Activated CD8-positive, alpha-beta T cell treated with anti-CD3 and anti-CD28 coated beads for 36 hours (primary cell): ENCODE measurements at regions of chr2 and their contacts with region 1.

Region 1: GRCh38 chr2:28392297-28393113 is at the start of gene FOSL2:
- DNase-seq: peak; percentile 94
- ATAC-seq: peak; percentile 74
- H3K4me3 Mint-ChIP-seq: peak within 1 kb of the TSS; percentile 89
- H3K27ac Mint-ChIP-seq: peak within 1 kb of the TSS; percentile 96
- H3K4me1 Mint-ChIP-seq: peaks cover 30% of the 10 kb centered on the region
- H3K27me3 Mint-ChIP-seq: no peaks in the 10 kb centered on the region
- CTCF ChIP-seq: no peak
- total RNA-seq, gene FOSL2: 114 to 119 TPM

Region 2: GRCh38 chr2:27715318-27716210 is 676.9 kb before region 1 on chr2:
- CTCF ChIA-PET with region 1: no interaction called
- POLR2A ChIA-PET with region 1: no interaction called
- intact Hi-C with region 1: loop called (anchors 10 kb)
- DNase-seq: peak; percentile 70
- ATAC-seq: peak; percentile 43
- H3K4me3 Mint-ChIP-seq: peak overlapping the region; percentile 29
- H3K27ac Mint-ChIP-seq: no peak overlapping the region
- H3K4me1 Mint-ChIP-seq: peaks cover 46% of the 10 kb centered on the region
- H3K27me3 Mint-ChIP-seq: peaks cover 15% of the 10 kb centered on the region
- CTCF ChIP-seq: no peak

Region 3: DNA sequence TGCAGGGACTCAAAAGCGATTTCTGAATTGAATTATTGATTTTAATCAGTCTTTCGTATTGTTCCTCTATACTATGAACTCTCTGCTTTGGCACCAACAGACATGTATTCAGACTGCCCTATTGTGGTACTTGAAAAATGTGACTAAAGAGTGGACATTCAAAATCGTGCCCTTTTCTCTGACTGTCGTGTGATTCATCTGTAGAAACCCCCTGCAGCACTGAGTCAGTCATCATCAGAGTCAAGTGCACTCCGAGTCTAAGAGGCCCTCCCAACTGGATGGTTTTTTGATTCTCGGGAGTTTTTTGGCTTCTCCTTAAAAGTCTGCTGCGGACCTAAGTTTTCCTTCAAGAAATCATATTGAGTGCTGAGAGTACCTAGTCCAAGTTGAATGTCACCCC is 96.3 kb before region 1 on chr2:
- CTCF ChIA-PET with region 1: no interaction called
- POLR2A ChIA-PET with region 1: no interaction called
- intact Hi-C with region 1: no loop called
- DNase-seq: no peak
- ATAC-seq: peak; percentile 43
- H3K4me3 Mint-ChIP-seq: no peak overlapping the region
- H3K27ac Mint-ChIP-seq: no peak overlapping the region
- H3K4me1 Mint-ChIP-seq: peaks cover 19% of the 10 kb centered on the region
- H3K27me3 Mint-ChIP-seq: no peaks in the 10 kb centered on the region
- CTCF ChIP-seq: no peak

Region 4: DNA sequence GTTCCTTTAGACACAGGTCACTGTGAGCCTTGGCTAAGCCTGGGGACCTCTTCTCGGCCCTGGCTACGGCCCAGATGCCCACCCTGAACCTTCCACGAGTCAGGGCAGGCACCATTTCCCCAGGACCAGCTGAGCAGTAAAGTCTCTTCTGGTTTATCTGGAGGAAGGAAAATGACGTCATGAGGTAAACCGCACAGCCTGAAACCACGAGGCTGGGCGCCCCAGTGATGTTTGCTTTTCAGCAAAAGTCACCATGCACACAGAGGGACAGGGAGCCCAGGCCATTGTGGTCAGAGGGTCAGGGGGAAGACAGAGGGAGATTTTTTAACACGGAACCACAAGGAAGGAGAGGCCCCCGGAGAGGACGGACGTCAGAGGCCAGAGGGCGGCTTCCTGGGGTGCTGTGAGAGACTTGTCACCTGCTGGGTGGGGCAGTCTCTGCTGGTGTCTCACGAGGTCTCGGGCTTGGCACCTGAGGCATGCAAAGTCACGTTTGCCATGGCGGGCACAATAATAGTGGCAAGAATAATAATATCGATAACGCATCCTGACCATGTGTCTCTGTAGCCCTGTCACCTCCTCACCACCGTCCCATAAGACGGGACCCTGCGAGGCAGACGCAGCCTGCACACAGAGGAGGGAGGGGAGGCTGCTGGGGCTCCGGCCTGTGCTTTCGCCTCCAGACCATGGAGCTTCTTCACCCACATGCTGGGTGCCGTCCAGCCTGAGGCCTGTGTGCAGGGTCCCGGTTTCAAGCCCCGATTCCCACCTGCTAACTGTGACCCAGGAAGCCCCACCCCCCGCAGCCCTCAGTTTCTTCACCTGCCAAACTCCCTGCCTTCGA is 33.1 kb before region 1 on chr2:
- CTCF ChIA-PET with region 1: interaction called, 5 read pairs
- POLR2A ChIA-PET with region 1: interaction called, 11 read pairs
- intact Hi-C with region 1: no loop called
- DNase-seq: peak; percentile 93
- ATAC-seq: peak; percentile 79
- H3K4me3 Mint-ChIP-seq: peak overlapping the region; percentile 65
- H3K27ac Mint-ChIP-seq: peak overlapping the region; percentile 97
- H3K4me1 Mint-ChIP-seq: peaks cover 62% of the 10 kb centered on the region
- H3K27me3 Mint-ChIP-seq: no peaks in the 10 kb centered on the region
- CTCF ChIP-seq: no peak

Region 5: DNA sequence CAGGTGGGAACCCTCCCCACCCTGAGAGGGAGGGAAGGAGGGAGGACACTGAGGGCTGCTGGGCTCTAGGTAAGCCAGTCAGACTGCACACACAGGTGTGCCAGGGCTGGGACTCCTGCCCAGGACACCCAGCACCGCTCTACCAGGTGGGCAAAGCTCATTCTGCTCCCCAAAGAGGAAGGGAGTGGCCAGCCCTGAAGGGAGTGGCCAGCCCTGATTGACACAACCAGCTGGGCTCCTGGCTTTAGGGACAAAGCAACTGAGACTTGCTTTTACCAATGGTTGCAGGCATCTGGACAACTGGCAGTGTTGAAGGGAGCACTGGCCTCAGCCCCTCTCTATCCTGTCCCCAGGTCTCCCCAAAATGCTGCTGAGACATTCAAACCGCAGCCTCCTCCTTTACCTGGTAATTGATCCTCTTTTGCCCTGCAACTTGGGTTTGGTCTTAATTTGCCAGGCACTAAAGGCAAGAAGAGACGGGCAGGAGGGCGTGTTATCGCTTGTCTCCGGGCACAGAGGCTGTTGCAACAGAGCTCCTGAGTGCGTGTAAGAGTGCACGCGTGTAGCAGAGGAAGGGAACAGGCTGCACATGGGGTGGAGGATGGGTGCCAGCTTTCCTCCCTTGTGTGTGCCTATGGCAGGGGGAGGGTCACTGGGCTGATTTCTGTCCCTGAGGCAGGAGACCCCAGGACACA is 14.4 kb before region 1 on chr2:
- CTCF ChIA-PET with region 1: no interaction called
- POLR2A ChIA-PET with region 1: interaction called, 19 read pairs
- intact Hi-C with region 1: no loop called
- DNase-seq: no peak
- ATAC-seq: no peak
- H3K4me3 Mint-ChIP-seq: no peak overlapping the region
- H3K27ac Mint-ChIP-seq: no peak overlapping the region
- H3K4me1 Mint-ChIP-seq: peaks cover 14% of the 10 kb centered on the region
- H3K27me3 Mint-ChIP-seq: no peaks in the 10 kb centered on the region
- CTCF ChIP-seq: no peak

Region 6: GRCh38 chr2:28406276-28407096 is 14.0 kb after region 1 on chr2:
- CTCF ChIA-PET with region 1: interaction called, 4 read pairs
- POLR2A ChIA-PET with region 1: interaction called, 12 read pairs
- intact Hi-C with region 1: no loop called
- DNase-seq: peak; percentile 89
- ATAC-seq: peak; percentile 61
- H3K4me3 Mint-ChIP-seq: no peak overlapping the region
- H3K27ac Mint-ChIP-seq: peak overlapping the region; percentile 97
- H3K4me1 Mint-ChIP-seq: peaks cover 96% of the 10 kb centered on the region
- H3K27me3 Mint-ChIP-seq: no peaks in the 10 kb centered on the region
- CTCF ChIP-seq: no peak

Region 7: DNA sequence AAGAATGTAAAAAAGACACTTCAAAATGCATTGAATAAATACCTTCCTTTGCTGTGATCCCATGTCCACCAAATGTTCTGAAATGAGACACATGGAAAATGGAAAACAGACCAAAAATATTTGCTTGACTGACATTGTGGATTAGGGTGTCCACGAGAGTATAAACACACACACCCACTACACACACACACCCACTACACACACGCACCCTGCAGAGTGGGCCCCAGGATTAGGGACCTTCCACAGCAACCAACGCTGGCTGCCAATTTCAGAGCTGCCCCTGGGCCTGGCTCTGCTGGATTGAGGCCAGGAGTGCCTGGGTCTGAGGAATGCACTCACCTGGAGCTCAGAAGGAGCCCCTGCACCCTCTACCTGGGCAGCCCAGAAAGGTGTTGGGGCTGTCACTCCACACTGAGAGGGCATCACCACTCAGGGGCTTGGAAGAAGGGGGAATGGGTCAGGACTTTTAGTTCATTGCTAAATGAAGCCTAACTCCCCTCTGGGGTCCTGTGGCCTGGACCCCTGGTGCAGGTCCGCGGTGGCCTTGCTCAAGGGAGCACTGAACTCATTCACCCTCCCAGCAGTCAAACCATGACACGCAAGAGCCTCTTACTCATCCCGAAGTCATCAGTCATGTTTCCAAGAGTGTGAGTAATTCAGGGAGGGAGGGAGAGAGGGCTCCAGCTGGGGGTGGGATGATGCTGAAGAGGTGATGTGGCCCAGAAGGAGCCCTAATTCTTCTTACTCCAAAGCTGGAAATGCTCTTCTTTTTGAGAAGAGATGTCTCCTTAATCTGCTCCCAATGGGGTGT is 53.1 kb after region 1 on chr2:
- CTCF ChIA-PET with region 1: no interaction called
- POLR2A ChIA-PET with region 1: interaction called, 11 read pairs
- intact Hi-C with region 1: loop called (anchors 5 kb)
- DNase-seq: peak; percentile 81
- ATAC-seq: peak; percentile 74
- H3K4me3 Mint-ChIP-seq: no peak overlapping the region
- H3K27ac Mint-ChIP-seq: peak overlapping the region; percentile 59
- H3K4me1 Mint-ChIP-seq: peaks cover 64% of the 10 kb centered on the region
- H3K27me3 Mint-ChIP-seq: no peaks in the 10 kb centered on the region
- CTCF ChIP-seq: no peak

Region 8: GRCh38 chr2:28452534-28453081 is 60.1 kb after region 1 on chr2:
- CTCF ChIA-PET with region 1: interaction called, 5 read pairs
- POLR2A ChIA-PET with region 1: interaction called, 11 read pairs
- intact Hi-C with region 1: loop called (anchors 5 kb)
- DNase-seq: peak; percentile 91
- ATAC-seq: peak; percentile 72
- H3K4me3 Mint-ChIP-seq: no peak overlapping the region
- H3K27ac Mint-ChIP-seq: no peak overlapping the region
- H3K4me1 Mint-ChIP-seq: peaks cover 41% of the 10 kb centered on the region
- H3K27me3 Mint-ChIP-seq: no peaks in the 10 kb centered on the region
- CTCF ChIP-seq: peak; percentile 96